Gastrocnemius medialis (tissue), 4 donors: ENCODE measurements at regions of chr12 and their contacts with region 1.

Region 1: DNA sequence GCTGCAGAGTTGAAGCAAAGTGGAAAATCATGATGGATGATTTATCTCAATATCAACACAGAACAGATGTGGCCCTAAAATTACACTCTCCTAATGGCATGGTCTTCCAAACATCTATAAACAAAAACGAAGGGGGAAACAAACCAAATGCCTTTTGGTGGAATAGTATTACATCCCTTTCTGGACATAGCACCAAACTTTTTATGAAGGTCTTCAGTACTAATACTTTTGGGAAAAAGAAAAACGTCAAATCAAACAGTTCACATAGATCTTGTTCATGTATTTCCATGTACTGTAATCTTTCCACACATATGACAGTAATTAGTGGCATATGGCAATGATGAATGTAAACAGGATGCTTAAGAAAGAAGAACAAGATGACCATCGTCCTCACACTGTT is 22.9 kb upstream of the ANAPC7 start:
- DNase-seq: no peak
- ATAC-seq: no peak
- H3K4me3 ChIP-seq: no peak overlapping the region
- H3K27ac ChIP-seq: no peak overlapping the region
- H3K4me1 ChIP-seq: no peaks in the 10 kb centered on the region
- H3K27me3 ChIP-seq: no peaks in the 10 kb centered on the region
- CTCF ChIP-seq: no peak
- POLR2A ChIP-seq: no peak

Region 2: DNA sequence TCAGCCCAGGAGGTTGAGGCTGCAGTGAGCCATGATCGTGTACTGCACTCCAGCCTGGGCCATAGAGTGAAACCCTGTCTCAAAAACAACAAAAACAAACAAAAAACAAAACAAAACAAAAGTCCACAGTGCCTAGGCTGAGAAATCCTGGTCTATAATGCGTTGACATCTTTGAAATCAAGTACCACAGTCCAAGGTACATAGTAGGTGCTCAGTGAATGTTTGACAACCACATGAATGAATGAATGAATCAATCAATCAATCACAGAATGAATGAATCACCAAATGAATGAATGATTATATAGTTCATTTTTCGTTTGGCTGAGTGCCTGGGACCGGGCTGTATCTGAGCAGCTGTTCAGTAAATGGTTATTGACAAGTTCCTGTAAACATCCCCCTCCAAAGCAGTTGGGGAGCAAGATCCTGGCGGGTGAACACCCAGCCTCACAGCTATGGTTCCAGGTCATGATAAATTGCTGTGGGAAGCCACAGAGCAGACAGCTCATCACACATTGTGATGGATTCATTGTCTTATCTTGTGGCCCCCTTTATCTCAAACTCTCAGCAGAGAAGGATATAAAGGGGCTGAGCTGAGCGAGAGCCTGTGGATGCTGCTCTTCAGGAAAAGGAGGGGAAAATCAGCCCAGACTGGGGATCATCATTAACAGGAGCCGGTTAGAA is 332.6 kb before region 1 on chr12:
- in situ Hi-C with region 1: loop called in 2 of 4 experiments (anchors 5 to 10 kb)
- intact Hi-C with region 1: no loop called
- DNase-seq: no peak
- ATAC-seq: no peak
- H3K4me3 ChIP-seq: no peak overlapping the region
- H3K27ac ChIP-seq: no peak overlapping the region
- H3K4me1 ChIP-seq: no peaks in the 10 kb centered on the region
- H3K27me3 ChIP-seq: no peaks in the 10 kb centered on the region
- CTCF ChIP-seq: no peak
- POLR2A ChIP-seq: no peak